CD8-positive, alpha-beta T cell (primary cell): ENCODE measurements at regions of chr10 and their contacts with region 1.

Region 1: DNA sequence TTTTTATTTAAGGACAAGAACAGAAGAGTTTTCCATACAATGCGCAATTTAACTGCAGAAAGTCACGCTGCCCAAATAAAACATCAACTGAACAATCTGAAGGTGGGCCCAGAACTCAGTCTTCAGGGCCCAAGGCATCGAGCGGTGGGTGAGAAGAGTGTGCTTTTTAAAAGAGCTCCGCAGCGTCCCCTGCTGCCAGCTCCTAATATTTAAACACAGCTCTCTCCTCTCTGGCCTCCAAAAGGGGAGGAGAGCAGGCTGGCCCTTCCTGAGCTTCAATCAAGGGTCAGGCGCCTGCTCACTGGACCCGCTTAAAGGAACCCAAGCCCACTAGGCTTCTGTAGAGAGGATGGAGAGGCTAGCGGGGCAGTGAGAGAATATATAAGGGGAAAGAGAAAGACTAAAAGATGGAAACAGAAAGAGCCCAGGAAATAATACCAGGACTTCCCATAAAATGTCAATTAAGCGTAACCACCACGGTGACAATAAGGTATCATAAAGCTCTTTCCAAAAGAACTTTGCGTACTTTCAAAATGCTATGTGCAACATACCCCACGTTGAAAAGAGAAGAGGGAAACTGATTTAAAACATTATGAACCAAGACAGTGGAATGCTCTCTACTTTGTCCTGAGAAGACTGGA is 2.8 kb downstream of the FAM53B start:
- DNase-seq: peak; percentile 64 to 88 (median 80)
- ATAC-seq: peak; percentile 55
- H3K4me3 ChIP-seq: peak overlapping the region; percentile 10 to 75
- H3K4me3 Mint-ChIP-seq: peak overlapping the region; percentile 97
- H3K27ac ChIP-seq: peak overlapping the region in 1 of 2 experiments; percentile 73
- H3K27ac Mint-ChIP-seq: peak overlapping the region; percentile 93
- H3K4me1 ChIP-seq: peaks cover 67% of the 10 kb centered on the region
- H3K4me1 Mint-ChIP-seq: peaks cover 75% of the 10 kb centered on the region
- H3K27me3 ChIP-seq: no peaks in the 10 kb centered on the region
- H3K27me3 Mint-ChIP-seq: no peaks in the 10 kb centered on the region
- CTCF ChIP-seq: peak; percentile 94

Region 2: GRCh38 chr10:123573236-123574108 is 1167.9 kb before region 1 on chr10:
- CTCF ChIA-PET with region 1: no interaction called
- POLR2A ChIA-PET with region 1: no interaction called
- intact Hi-C with region 1: loop called in 1 of 2 experiments (anchors 10 kb)
- DNase-seq: peak in 5 of 9 experiments; percentile 11 to 47 (median 39)
- ATAC-seq: no peak
- H3K4me3 ChIP-seq: no peak overlapping the region
- H3K4me3 Mint-ChIP-seq: no peak overlapping the region
- H3K27ac ChIP-seq: no peak overlapping the region
- H3K27ac Mint-ChIP-seq: no peak overlapping the region
- H3K4me1 ChIP-seq: no peaks in the 10 kb centered on the region
- H3K4me1 Mint-ChIP-seq: no peaks in the 10 kb centered on the region
- H3K27me3 ChIP-seq: peaks cover 0 to 6% of the 10 kb centered on the region in 2 experiments
- H3K27me3 Mint-ChIP-seq: peaks cover 23% of the 10 kb centered on the region
- CTCF ChIP-seq: peak; percentile 35

Region 3: DNA sequence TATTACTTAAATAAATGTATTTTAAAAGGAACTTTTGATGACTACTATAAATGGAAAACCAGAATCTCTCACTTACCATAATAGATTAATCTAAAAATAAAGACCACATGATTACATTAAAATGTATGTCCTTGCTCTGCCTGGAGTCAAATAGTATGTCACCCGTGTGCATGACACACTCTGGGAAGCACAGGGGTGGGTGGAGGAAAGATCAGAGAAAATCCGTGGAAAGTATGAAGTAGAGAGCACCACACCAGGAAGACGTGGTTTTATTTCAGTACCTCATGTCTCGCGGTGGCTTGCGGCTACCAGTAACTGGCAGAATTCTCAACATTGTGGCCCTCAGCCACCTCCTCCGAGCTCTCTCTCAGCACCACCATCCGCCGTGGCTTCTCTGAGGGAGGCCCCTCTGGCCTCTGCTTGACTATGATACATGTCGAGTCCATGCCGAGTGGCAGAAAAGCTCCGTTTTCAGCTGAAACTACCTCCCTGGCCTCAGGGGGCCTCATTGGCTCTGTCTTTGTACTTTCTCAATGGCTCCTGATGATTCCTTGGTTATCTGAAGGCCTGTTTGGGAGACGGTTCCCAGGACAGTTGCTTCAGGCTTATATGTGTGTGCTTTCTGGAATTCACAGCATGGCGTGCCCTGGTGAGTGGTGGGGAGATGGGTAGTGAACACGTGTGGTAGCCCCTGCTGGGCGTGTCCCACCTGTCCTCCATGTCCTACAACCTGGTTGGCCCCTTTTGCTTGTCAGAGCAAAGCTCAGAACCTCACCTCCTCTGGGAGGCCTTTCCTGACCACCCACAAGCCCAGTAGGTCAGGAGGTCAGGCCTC is 230.0 kb before region 1 on chr10:
- CTCF ChIA-PET with region 1: no interaction called
- POLR2A ChIA-PET with region 1: no interaction called
- intact Hi-C with region 1: no loop called
- DNase-seq: peak in 2 of 9 experiments; percentile 25 to 34
- ATAC-seq: peak; percentile 14
- H3K4me3 ChIP-seq: no peak overlapping the region
- H3K4me3 Mint-ChIP-seq: no peak overlapping the region
- H3K27ac ChIP-seq: no peak overlapping the region
- H3K27ac Mint-ChIP-seq: no peak overlapping the region
- H3K4me1 ChIP-seq: no peaks in the 10 kb centered on the region
- H3K4me1 Mint-ChIP-seq: peaks cover 4% of the 10 kb centered on the region
- H3K27me3 ChIP-seq: no peaks in the 10 kb centered on the region
- H3K27me3 Mint-ChIP-seq: no peaks in the 10 kb centered on the region
- CTCF ChIP-seq: no peak

Region 4: DNA sequence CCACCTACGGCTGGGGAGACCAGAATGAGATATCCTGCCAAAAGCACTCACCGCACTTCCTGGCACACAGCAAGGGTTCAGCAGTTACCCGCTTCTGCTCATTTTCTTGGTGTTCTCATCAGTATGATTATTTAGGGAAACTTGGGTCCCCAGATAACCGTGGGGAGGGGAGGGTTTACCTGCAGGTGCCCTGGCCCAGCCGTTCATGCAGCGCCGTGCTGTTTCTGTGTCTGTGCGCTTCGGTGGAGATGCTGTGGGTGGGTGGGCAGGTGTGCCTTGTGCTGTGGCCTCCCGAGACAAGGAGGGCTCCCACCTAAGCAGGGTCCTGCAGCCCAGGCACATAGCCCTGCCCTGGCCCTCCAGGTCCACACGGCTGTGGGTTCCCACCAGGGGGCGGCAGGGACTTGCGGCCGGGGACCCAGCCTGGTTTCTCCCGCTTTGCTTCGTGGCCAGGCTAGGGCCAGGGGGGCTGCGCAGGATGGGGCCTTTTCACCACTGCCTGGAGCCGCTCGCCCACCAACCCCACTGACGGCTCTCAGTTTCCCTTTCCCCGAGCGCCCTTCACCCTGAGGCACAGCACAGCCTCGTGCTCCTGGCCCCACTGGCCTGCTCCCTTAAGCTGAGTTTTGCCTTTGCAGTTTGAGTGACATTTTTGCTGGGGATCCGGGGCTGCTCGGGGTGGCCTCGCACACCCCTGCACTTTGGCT is 201.3 kb before region 1 on chr10:
- CTCF ChIA-PET with region 1: interaction called, 140 read pairs
- POLR2A ChIA-PET with region 1: interaction called, 10 read pairs
- intact Hi-C with region 1: loop called (anchors 1 kb)
- DNase-seq: peak; percentile 48 to 85 (median 75)
- ATAC-seq: peak; percentile 84
- H3K4me3 ChIP-seq: no peak overlapping the region
- H3K4me3 Mint-ChIP-seq: no peak overlapping the region
- H3K27ac ChIP-seq: no peak overlapping the region
- H3K27ac Mint-ChIP-seq: no peak overlapping the region
- H3K4me1 ChIP-seq: peaks cover 18% of the 10 kb centered on the region
- H3K4me1 Mint-ChIP-seq: peaks cover 14% of the 10 kb centered on the region
- H3K27me3 ChIP-seq: no peaks in the 10 kb centered on the region
- H3K27me3 Mint-ChIP-seq: no peaks in the 10 kb centered on the region
- CTCF ChIP-seq: peak; percentile 70

Region 5: GRCh38 chr10:124632064-124632531 is 109.3 kb before region 1 on chr10:
- CTCF ChIA-PET with region 1: interaction called, 73 read pairs
- POLR2A ChIA-PET with region 1: interaction called, 10 read pairs
- intact Hi-C with region 1: loop called (anchors 1 kb)
- DNase-seq: peak in 6 of 9 experiments; percentile 43 to 73 (median 62)
- ATAC-seq: peak; percentile 30
- H3K4me3 ChIP-seq: no peak overlapping the region
- H3K4me3 Mint-ChIP-seq: no peak overlapping the region
- H3K27ac ChIP-seq: peak overlapping the region in 1 of 2 experiments; percentile 26
- H3K27ac Mint-ChIP-seq: peak overlapping the region; percentile 45
- H3K4me1 ChIP-seq: peaks cover 53% of the 10 kb centered on the region
- H3K4me1 Mint-ChIP-seq: peaks cover 64% of the 10 kb centered on the region
- H3K27me3 ChIP-seq: no peaks in the 10 kb centered on the region
- H3K27me3 Mint-ChIP-seq: no peaks in the 10 kb centered on the region
- CTCF ChIP-seq: peak; percentile 42

Region 6: DNA sequence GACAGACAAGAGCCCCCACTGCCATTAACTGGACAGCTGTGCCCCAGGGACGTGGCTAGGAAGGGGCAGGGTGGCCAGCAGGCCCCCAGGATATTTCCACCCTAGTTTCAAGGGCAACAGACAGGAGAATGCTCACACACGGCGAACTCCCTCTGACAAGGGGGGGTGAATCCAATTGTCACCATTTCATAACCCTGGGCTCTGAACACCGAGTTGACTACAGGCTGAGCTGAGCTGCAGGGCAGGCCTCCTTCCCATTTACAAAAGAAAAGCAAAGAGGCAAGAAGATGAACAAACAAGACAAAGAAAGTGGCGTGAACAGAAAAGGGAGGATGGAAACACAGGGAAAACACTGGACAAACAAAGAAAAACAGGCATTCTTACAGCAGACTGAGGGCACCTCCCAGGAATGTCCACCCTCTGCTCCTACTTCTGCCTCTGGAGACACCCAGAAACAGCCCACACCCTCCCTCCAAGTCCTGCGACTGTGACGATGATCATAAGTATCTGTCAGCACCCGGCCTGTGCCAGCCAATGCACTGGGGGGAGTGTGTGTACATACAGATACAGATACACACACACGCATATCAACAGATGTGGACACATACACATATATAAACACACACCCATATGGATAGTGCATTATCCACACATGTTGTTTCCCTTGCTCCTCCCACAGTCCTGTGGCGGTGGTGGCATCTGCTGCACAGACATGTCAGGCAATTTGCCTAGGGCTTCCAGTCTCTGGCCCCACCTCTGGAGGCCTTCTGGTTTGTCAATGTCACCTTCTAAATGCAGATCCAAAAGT is 63.4 kb before region 1 on chr10:
- CTCF ChIA-PET with region 1: interaction called, 42 read pairs
- POLR2A ChIA-PET with region 1: interaction called, 6 read pairs
- intact Hi-C with region 1: no loop called
- DNase-seq: peak in 1 of 9 experiments; percentile 41
- ATAC-seq: peak; percentile 26
- H3K4me3 ChIP-seq: peak overlapping the region; percentile 27 to 40
- H3K4me3 Mint-ChIP-seq: peak overlapping the region; percentile 76
- H3K27ac ChIP-seq: peak overlapping the region in 1 of 2 experiments; percentile 57
- H3K27ac Mint-ChIP-seq: peak overlapping the region; percentile 91
- H3K4me1 ChIP-seq: peaks cover 86% of the 10 kb centered on the region
- H3K4me1 Mint-ChIP-seq: peaks cover 86% of the 10 kb centered on the region
- H3K27me3 ChIP-seq: no peaks in the 10 kb centered on the region
- H3K27me3 Mint-ChIP-seq: no peaks in the 10 kb centered on the region
- CTCF ChIP-seq: no peak

Region 7: DNA sequence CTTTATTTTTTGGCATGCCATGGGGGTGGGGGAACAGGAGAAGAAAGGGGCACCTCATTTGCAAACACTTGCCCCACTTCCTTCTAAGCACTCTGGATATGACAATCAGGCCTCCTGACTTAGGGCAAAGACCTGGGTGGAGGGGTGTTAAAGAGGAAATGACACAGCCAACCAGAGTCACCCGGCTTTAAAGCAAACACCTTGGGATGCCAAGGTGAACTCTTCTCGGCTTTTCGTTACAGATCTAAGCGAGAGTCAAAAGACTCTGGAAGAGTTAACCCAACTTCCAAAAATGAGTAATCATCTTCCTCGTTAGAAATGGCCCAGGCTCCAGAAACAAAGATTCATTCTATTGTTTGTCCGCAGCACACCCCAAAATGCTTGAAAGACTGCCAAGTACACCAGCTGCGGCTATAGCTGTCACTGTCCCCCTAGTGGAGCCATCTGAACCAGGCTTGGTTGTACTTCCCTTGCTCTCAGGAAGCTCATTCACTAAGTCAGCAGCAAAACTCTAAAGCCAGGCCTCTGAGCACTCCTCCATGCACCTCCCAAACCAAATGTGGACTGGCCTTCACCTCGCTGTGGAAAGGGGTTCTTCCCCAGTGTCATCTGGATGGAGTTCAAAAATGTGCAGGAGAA is 22.1 kb before region 1 on chr10:
- CTCF ChIA-PET with region 1: interaction called, 161 read pairs
- POLR2A ChIA-PET with region 1: interaction called, 67 read pairs
- intact Hi-C with region 1: loop called (anchors 1 kb)
- DNase-seq: peak; percentile 44 to 92 (median 74)
- ATAC-seq: peak; percentile 49
- H3K4me3 ChIP-seq: peak overlapping the region; percentile 17 to 19
- H3K4me3 Mint-ChIP-seq: peak overlapping the region; percentile 80
- H3K27ac ChIP-seq: peak overlapping the region; percentile 59 to 90
- H3K27ac Mint-ChIP-seq: peak overlapping the region; percentile 99
- H3K4me1 ChIP-seq: peaks cover 93% of the 10 kb centered on the region
- H3K4me1 Mint-ChIP-seq: peaks cover 91% of the 10 kb centered on the region
- H3K27me3 ChIP-seq: no peaks in the 10 kb centered on the region
- H3K27me3 Mint-ChIP-seq: no peaks in the 10 kb centered on the region
- CTCF ChIP-seq: peak; percentile 59